Left ventricle myocardium inferior (tissue), 1 donor: ENCODE measurements at regions of chr2 and their contacts with region 1.

Region 1: GRCh38 chr2:9261231-9261883 is 54.7 kb downstream of the ASAP2 start:
- DNase-seq: no peak
- H3K4me3 ChIP-seq: no peak overlapping the region
- H3K27ac ChIP-seq: peak overlapping the region; percentile 90
- H3K4me1 ChIP-seq: peaks cover 98% of the 10 kb centered on the region
- H3K27me3 ChIP-seq: no peaks in the 10 kb centered on the region
- CTCF ChIP-seq: no peak

Region 2: GRCh38 chr2:8836971-8837794 is 424.2 kb before region 1 on chr2 and contains the start of gene KIDINS220:
- intact Hi-C with region 1: no loop called
- DNase-seq: peak; percentile 83
- H3K4me3 ChIP-seq: peak within 1 kb of the TSS; percentile 100
- H3K27ac ChIP-seq: peak within 1 kb of the TSS; percentile 91
- H3K4me1 ChIP-seq: peaks cover 57% of the 10 kb centered on the region
- H3K27me3 ChIP-seq: no peaks in the 10 kb centered on the region
- CTCF ChIP-seq: no peak
- total RNA-seq, gene KIDINS220: 60.0 TPM

Region 3: DNA sequence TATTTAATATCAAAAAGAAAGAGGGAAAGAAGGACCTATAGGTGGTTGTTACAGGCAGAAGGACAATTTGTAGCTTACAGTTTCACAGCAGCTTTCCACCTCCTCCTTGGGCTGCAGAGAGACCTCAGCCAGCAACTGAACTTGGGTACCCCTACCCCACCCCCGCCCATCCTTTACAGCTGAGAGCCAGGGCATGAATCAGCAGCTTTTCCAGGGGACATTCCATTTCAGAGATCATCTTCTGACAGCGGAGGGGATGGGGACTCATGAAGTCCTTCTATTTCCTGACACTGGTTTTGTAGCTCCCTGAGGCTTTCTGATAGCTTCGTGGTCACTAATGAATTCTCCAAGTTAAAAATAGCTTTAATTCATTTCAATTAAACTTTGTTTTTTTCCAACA is 65.6 kb after region 1 on chr2:
- intact Hi-C with region 1: loop called (anchors 10 kb)
- DNase-seq: no peak
- H3K4me3 ChIP-seq: no peak overlapping the region
- H3K27ac ChIP-seq: peak overlapping the region; percentile 25
- H3K4me1 ChIP-seq: peaks cover 53% of the 10 kb centered on the region
- H3K27me3 ChIP-seq: no peaks in the 10 kb centered on the region
- CTCF ChIP-seq: no peak